A673 (cell line): ENCODE measurements at regions of chr6 and their contacts with region 1.

Region 1: GRCh38 chr6:108558372-108559096 is 2.2 kb upstream of the FOXO3 start:
- DNase-seq: peak; percentile 99
- H3K4me3 ChIP-seq: peak overlapping the region; percentile 97
- H3K27ac ChIP-seq: peak overlapping the region; percentile 79
- H3K4me1 ChIP-seq: peaks cover 19% of the 10 kb centered on the region
- H3K27me3 ChIP-seq: no peaks in the 10 kb centered on the region
- CTCF ChIP-seq: no peak

Region 2: GRCh38 chr6:108782179-108783041 is 223.9 kb after region 1 on chr6:
- CTCF ChIA-PET with region 1: no interaction called
- POLR2A ChIA-PET with region 1: no interaction called
- intact Hi-C with region 1: loop called (anchors 2 kb)
- DNase-seq: peak; percentile 83
- H3K4me3 ChIP-seq: peak overlapping the region; percentile 46
- H3K27ac ChIP-seq: no peak overlapping the region
- H3K4me1 ChIP-seq: peaks cover 18% of the 10 kb centered on the region
- H3K27me3 ChIP-seq: no peaks in the 10 kb centered on the region
- CTCF ChIP-seq: peak; percentile 91

Region 3: DNA sequence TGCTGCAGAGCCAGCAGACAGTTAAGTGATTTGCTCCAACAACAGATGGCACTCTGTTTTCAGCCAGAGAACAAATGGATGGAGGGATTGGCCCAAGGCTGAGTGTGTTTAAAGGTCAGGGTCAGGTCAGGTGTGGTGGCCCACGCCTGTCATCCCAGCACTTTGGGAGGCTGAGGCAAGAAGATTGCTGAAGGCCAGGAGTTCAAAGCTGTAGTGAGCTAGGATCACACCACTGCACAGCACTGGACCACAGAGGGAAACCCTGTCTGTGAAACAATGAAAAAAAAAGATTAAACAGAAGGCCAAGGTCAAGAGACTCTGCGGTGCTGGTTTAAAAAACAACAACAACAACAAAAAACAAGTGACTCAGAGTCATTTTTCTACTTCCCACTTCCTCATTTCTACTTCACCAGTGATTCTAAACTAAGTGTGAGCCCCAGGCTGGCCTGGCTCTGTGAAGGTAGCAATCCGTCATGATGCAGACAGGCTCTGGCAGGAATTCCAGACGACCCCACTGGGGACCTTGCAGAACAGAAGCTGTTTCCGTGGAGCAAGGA is 247.2 kb after region 1 on chr6:
- CTCF ChIA-PET with region 1: no interaction called
- POLR2A ChIA-PET with region 1: no interaction called
- intact Hi-C with region 1: no loop called
- DNase-seq: no peak
- H3K4me3 ChIP-seq: no peak overlapping the region
- H3K27ac ChIP-seq: no peak overlapping the region
- H3K4me1 ChIP-seq: no peaks in the 10 kb centered on the region
- H3K27me3 ChIP-seq: no peaks in the 10 kb centered on the region
- CTCF ChIP-seq: no peak

Region 4: GRCh38 chr6:108835218-108835850 is 276.8 kb after region 1 on chr6:
- CTCF ChIA-PET with region 1: no interaction called
- POLR2A ChIA-PET with region 1: no interaction called
- intact Hi-C with region 1: loop called (anchors 5 kb)
- DNase-seq: peak; percentile 81
- H3K4me3 ChIP-seq: no peak overlapping the region
- H3K27ac ChIP-seq: no peak overlapping the region
- H3K4me1 ChIP-seq: no peaks in the 10 kb centered on the region
- H3K27me3 ChIP-seq: no peaks in the 10 kb centered on the region
- CTCF ChIP-seq: peak; percentile 95

Region 5: DNA sequence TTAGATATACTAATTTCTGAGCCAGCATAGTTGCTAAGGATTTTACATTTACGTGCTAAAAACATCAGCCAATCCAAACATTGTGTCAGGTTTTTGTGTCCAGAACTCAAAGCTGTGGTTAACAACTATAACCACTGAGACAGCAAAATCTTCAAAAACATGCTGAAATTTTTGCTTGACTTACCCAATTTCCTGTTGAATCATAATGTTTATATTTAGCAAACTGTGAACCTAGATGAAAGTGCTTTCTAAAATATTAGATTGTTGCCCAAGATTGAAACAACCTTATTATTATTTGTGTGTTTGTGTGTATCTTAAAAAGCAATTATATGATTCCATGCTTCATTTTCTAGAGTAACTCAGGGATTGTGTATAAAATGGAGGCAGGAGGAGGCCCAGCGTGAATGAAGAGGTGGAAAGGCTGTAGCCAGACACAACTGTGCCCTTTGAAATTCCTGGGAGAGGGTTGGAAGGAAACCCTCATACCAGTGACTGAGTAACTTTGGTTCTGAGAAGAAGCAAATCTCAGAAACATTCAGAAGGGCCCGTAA is 337.7 kb after region 1 on chr6:
- CTCF ChIA-PET with region 1: no interaction called
- POLR2A ChIA-PET with region 1: no interaction called
- intact Hi-C with region 1: loop called (anchors 5 kb)
- DNase-seq: no peak
- H3K4me3 ChIP-seq: no peak overlapping the region
- H3K27ac ChIP-seq: no peak overlapping the region
- H3K4me1 ChIP-seq: peaks cover 10% of the 10 kb centered on the region
- H3K27me3 ChIP-seq: no peaks in the 10 kb centered on the region
- CTCF ChIP-seq: no peak

Region 6: GRCh38 chr6:109073344-109074132 is 515.0 kb after region 1 on chr6:
- CTCF ChIA-PET with region 1: interaction called, 6 read pairs
- POLR2A ChIA-PET with region 1: no interaction called
- intact Hi-C with region 1: loop called (anchors 5 kb)
- DNase-seq: peak; percentile 77
- H3K4me3 ChIP-seq: no peak overlapping the region
- H3K27ac ChIP-seq: no peak overlapping the region
- H3K4me1 ChIP-seq: peaks cover 3% of the 10 kb centered on the region
- H3K27me3 ChIP-seq: no peaks in the 10 kb centered on the region
- CTCF ChIP-seq: peak; percentile 71